ENCODE measurements at regions of chr13 and their contacts with region 1.

Region 1: DNA sequence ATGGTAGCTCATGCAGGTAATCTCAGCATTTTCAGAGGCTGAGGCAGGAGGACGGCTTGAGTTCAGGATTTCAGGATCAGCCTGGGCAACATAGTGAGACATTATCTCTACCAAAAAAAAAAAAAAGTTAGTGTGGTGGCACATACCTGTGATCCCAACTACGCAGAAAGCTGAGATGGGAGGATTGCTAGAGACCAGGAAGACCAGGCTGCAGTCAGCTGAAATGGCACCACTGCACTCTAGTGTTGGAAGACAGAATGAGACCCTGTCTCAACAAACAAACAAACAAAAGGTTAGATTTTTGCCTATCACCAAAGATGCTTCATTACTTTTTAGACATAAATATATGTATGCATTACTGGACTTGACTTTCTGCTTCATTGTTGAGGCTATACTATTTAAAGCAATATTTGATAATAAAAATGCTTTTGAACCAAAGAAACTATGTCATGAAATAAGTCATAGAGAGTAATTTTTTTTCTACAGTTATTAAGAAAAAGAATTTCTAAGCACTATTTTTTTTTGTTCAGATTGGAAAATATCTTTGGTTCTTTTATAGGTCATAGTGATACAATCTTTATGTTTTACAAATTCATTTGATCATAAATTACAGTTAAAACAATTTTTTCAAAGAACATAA is 1180.1 kb upstream of the ATXN8OS start:
- DNase-seq: no peak
- ATAC-seq: no peak

Region 2: DNA sequence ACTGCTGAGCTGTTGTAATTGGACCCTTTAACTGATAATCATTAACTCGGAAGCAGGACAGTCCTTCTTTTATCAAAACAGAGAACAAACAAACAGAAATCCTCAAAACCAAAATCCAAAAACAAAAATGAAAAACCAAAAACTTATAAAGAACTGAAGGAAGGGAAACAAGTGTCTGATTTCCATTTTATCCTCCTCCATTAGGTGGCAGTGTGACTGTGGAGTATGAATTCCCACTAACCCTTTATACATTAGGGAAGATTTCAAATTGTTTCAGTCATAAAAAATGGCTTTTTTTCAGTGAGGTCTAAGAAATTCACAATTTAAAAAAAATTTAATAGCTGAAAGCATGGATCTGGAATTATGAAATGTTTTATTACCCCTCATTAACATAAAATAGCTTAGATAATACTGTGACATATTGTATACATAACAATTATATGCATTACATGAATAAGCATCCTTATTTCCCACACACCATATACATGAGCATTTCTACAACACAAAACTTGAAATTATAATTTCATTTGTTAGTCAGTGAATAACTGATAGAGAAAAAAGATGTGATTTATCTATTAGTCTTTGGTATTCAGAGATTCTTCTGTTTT is 623.1 kb before region 1 on chr13:
- intact Hi-C with region 1: loop called (anchors 5 kb)
- DNase-seq: no peak
- ATAC-seq: no peak

Region 3: DNA sequence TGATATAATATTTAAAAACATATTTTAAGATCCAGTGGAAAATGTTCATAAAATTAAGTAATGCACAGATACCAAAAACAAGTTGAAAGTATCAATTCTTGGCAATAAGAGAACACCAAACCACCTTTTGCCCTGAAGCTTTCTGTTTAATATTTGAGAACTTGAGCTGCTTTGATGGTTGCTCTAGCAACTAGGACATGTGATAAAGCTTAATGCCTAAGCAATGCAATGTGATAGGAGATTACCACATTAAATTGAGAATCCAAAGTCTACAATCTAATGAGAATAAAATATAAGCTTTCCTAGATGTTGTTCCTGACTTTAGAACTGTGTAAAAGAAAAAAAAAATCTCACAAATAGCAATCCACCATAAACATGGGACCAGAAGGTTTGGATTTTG is 329.9 kb before region 1 on chr13:
- intact Hi-C with region 1: no loop called
- DNase-seq: no peak
- ATAC-seq: no peak

Measured in Right ventricle myocardium inferior (tissue), 1 donor.